ENCODE measurements at regions of chr3 and their contacts with region 1.

Region 1: DNA sequence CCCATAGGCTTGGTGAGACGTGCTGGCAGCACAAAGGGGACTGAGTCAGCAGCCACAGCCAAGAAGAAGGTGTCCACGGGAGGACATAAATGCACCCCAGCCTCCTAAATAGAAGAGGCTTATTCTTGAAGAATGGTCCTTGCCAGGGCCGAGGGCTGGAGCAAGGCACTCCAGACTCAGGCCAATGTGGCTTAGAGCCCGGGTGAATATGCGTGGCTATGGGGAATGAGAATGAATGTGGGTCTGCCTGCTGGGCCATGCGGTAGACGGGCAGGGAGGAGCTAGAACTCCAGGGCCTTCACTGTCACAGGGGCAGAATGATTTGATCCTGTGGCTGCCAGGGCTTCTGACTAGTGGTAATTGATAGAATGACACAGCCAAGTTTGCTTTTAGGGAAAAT is 34.0 kb downstream of the DHX30 start:
- DNase-seq: no peak
- H3K4me3 ChIP-seq: no peak overlapping the region
- H3K27ac ChIP-seq: no peak overlapping the region
- H3K4me1 ChIP-seq: peaks cover 0 to 7% (median 0%) of the 10 kb centered on the region in 6 donors
- H3K27me3 ChIP-seq: no peaks in the 10 kb centered on the region
- CTCF ChIP-seq: no peak
- POLR2A ChIP-seq: no peak

Region 2: DNA sequence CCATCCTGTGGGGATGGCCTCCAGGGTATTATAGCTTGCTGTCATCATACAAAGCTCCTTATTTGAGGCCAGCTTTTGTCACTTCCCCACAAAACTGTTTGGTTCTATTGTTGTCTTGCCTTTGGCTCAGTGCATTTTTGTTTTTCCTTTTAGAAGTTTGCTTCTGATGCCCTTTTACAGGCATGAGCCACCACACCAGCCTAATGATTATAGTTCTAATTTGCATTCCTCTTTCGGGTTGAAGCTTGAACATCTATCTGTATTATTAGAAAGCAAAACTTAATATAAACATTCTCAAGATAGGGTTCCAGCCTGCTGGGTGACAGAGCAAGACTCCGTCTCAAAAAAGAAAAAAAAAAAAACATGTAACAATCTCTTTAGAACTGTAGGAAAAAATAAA is 95.1 kb before region 1 on chr3:
- intact Hi-C with region 1: no loop called
- DNase-seq: no peak
- H3K4me3 ChIP-seq: no peak overlapping the region
- H3K27ac ChIP-seq: no peak overlapping the region
- H3K4me1 ChIP-seq: peaks cover 0 to 31% (median 14%) of the 10 kb centered on the region in 6 donors
- H3K27me3 ChIP-seq: no peaks in the 10 kb centered on the region
- CTCF ChIP-seq: no peak
- POLR2A ChIP-seq: no peak

Region 3: GRCh38 chr3:47950453-47951169 is 113.6 kb after region 1 on chr3:
- intact Hi-C with region 1: no loop called
- DNase-seq: no peak
- H3K4me3 ChIP-seq: no peak overlapping the region
- H3K27ac ChIP-seq: no peak overlapping the region
- H3K4me1 ChIP-seq: no peaks in the 10 kb centered on the region
- H3K27me3 ChIP-seq: no peaks in the 10 kb centered on the region
- CTCF ChIP-seq: no peak
- POLR2A ChIP-seq: no peak

Region 4: DNA sequence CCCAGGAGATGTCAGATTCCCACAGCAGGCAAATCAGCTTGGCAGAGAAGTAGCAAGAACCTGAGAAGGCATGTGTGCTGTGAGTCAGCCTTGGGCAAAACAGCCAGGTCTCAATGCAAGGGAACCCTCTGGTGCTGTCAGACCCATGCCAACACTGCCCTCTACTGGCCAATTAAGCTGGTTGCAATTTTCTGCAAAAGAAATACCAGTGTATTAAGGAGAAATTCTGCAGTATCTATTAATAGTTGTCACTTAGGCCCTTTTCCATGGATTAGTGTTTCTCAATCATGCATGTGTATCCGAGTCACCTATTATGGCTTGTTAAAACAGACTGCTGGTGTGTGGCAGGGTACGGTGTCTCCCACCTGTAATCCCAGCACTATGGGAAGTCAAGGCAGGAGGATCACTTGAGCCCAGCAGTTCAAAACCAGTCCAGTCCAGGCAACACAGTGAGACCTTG is 153.0 kb after region 1 on chr3:
- intact Hi-C with region 1: loop called (anchors 5 kb)
- DNase-seq: no peak
- H3K4me3 ChIP-seq: no peak overlapping the region
- H3K27ac ChIP-seq: no peak overlapping the region
- H3K4me1 ChIP-seq: peaks cover 6 to 43% (median 18%) of the 10 kb centered on the region in 6 donors
- H3K27me3 ChIP-seq: no peaks in the 10 kb centered on the region
- CTCF ChIP-seq: peak; percentile 67 to 89 (median 86)
- POLR2A ChIP-seq: no peak

Region 5: DNA sequence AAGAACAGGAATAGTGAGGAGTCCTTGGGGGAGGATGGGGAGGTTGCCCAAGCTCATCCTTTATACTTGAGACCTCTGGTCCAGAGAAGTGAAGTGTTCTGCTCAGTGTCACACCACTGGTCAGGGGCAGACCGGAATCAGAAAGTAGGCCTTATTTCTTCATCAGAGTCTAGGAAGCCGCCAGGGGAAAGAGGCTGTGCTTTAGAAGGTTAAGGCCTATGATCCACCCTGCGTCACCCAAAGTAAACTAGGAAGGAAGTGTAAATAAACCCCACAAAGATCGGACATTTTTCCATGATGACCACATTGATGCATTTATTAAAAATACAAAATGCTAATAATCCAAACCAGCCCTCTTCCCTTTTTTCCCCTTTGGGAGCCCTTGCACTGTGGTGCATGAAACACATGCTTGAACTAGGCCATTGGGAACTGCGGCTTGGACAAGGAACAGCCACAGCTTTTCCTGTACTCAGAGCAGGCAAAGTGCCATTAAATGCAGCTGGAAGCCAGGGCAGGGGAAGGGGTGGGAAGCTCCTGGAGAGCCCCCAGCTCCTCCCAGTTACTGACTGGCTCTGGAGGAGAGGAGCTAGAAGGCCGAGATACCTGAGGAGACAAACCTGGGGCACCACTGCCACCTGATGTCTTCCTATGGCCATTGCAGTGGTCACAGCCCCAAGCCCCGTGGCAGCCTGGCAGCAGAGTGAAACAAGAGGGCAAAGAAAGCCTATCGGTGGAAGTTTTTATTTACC is 314.2 kb after region 1 on chr3:
- intact Hi-C with region 1: loop called (anchors 5 kb)
- DNase-seq: peak; percentile 87
- H3K4me3 ChIP-seq: no peak overlapping the region
- H3K27ac ChIP-seq: peak overlapping the region in 6 of 8 donors; percentile 28 to 62 (median 44)
- H3K4me1 ChIP-seq: peaks cover 0 to 19% (median 12%) of the 10 kb centered on the region in 6 donors
- H3K27me3 ChIP-seq: no peaks in the 10 kb centered on the region
- CTCF ChIP-seq: peak; percentile 55 to 90 (median 84)
- POLR2A ChIP-seq: no peak